WTC11 (cell line): ENCODE measurements at regions of chr9 and their contacts with region 1.

Region 1: GRCh38 chr9:72826996-72827949 is 125.6 kb downstream of the ALDH1A1 start:
- DNase-seq: no peak
- ATAC-seq: no peak
- H3K4me3 Mint-ChIP-seq: no peak overlapping the region
- H3K27ac Mint-ChIP-seq: no peak overlapping the region
- H3K4me1 Mint-ChIP-seq: peaks cover 9% of the 10 kb centered on the region; the same call in 1 of the 2 replicates
- H3K27me3 Mint-ChIP-seq: no peaks in the 10 kb centered on the region
- CTCF ChIP-seq: no peak

Region 2: GRCh38 chr9:72743836-72744235 is 83.4 kb before region 1 on chr9:
- CTCF ChIA-PET with region 1: no interaction called
- POLR2A ChIA-PET with region 1: no interaction called
- DNase-seq: no peak
- ATAC-seq: no peak
- H3K4me3 Mint-ChIP-seq: no peak overlapping the region
- H3K27ac Mint-ChIP-seq: no peak overlapping the region
- H3K4me1 Mint-ChIP-seq: peaks cover 11% of the 10 kb centered on the region
- H3K27me3 Mint-ChIP-seq: no peaks in the 10 kb centered on the region; the same call in 1 of the 2 replicates
- CTCF ChIP-seq: no peak

Region 3: GRCh38 chr9:72814083-72814597 is 13.1 kb before region 1 on chr9:
- CTCF ChIA-PET with region 1: no interaction called
- POLR2A ChIA-PET with region 1: no interaction called
- DNase-seq: no peak
- ATAC-seq: no peak
- H3K4me3 Mint-ChIP-seq: no peak overlapping the region
- H3K27ac Mint-ChIP-seq: no peak overlapping the region
- H3K4me1 Mint-ChIP-seq: no peaks in the 10 kb centered on the region
- H3K27me3 Mint-ChIP-seq: no peaks in the 10 kb centered on the region
- CTCF ChIP-seq: no peak

Region 4: DNA sequence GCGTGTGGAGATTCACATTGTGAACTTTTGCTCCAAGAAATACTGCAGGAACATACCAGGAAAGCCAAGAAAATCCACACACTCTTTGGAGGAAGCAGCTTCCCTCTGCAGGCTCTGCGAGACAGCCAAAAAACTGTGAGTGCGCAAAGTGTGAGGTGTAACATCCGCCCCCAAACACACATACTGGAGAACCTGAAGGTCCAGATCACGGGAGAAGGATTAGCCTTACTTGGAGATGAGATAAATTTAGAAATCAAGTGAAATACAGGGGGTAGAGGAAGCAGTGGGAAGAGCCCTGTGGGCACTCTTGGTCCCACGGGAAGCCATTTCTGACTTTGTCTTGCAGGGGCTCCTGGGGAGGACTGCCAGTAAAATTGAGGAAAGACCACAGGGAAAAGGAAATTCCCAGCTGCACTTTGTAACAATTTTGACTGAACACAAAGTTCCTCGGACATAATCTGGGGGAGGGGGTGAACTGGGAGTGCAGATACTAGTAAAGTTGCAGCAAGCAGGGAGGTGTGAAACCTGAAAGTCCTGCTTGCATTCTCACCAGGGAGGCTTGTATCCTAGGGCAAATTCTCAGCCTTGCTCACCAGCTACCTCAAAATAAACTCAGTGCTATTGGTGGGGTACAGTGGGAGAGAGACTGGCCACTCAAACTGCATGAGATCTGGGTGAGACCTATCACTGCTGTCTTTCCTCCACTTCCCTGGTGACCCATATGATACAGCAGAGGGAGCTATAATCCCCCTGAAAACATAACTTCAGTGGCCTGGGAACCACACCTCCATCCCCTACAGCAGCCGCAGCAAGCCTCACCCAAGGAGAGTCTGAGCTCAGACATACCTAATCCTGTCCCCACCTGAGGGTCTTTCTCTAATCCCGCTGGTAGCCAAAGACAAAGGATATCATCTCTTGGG is 16.5 kb after region 1 on chr9:
- CTCF ChIA-PET with region 1: interaction called, 11 read pairs
- POLR2A ChIA-PET with region 1: no interaction called
- DNase-seq: peak; percentile 34
- ATAC-seq: peak; percentile 100
- H3K4me3 Mint-ChIP-seq: no peak overlapping the region
- H3K27ac Mint-ChIP-seq: no peak overlapping the region
- H3K4me1 Mint-ChIP-seq: peaks cover 15% of the 10 kb centered on the region
- H3K27me3 Mint-ChIP-seq: no peaks in the 10 kb centered on the region; the same call in 1 of the 2 replicates
- CTCF ChIP-seq: no peak

Region 5: GRCh38 chr9:73194284-73194683 is 367.0 kb after region 1 on chr9:
- CTCF ChIA-PET with region 1: no interaction called
- POLR2A ChIA-PET with region 1: no interaction called
- DNase-seq: no peak
- ATAC-seq: no peak
- H3K4me3 Mint-ChIP-seq: no peak overlapping the region
- H3K27ac Mint-ChIP-seq: no peak overlapping the region
- H3K4me1 Mint-ChIP-seq: no peaks in the 10 kb centered on the region
- H3K27me3 Mint-ChIP-seq: no peaks in the 10 kb centered on the region
- CTCF ChIP-seq: no peak